Astrocyte of the cerebellum (primary cell): ENCODE measurements at regions of chr18 and their contacts with region 1.

Region 1: DNA sequence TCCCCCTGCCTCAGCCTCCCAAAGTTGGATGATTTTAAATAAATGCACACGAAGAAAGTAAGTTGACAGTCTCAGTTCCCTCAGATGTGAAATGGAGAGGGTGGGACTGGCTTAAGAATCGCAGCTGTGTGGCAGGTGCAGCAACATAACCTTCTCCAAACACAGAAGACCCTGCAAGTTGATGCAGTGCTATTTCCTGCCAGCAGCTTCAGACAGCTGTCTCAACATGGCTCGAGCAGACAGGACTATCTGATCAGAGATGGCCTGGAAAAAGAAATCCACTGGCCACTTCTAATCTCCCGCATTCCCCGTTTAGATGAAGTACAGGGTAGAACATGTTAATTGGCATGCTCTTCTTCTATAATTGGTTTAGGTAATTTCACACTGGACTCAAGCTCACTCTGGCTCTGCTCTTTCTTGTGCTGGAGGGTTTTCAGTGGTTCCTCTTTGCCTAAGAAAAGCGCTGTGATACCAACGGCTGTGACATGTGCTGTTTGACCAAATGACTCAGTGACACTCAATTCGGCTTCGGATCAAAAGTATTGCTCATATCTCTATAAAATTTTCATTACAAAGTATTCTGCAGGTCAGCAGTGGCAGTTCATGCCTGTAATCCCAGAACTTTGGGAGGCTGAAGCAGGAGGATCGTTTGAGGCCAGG is 40.2 kb downstream of the MYOM1 start:
- DNase-seq: no peak
- H3K4me3 ChIP-seq: no peak overlapping the region
- CTCF ChIP-seq: no peak

Region 2: GRCh38 chr18:3135536-3135935 is 44.0 kb before region 1 on chr18:
- in situ Hi-C with region 1: no loop called
- DNase-seq: no peak
- H3K4me3 ChIP-seq: no peak overlapping the region
- CTCF ChIP-seq: no peak

Region 3: GRCh38 chr18:3230401-3231334 is 51.1 kb after region 1 on chr18:
- in situ Hi-C with region 1: loop called (anchors 5 kb)
- DNase-seq: no peak
- H3K4me3 ChIP-seq: no peak overlapping the region
- CTCF ChIP-seq: no peak